HepG2 (cell line): ENCODE measurements at regions of chr1 and their contacts with region 1.

Region 1: DNA sequence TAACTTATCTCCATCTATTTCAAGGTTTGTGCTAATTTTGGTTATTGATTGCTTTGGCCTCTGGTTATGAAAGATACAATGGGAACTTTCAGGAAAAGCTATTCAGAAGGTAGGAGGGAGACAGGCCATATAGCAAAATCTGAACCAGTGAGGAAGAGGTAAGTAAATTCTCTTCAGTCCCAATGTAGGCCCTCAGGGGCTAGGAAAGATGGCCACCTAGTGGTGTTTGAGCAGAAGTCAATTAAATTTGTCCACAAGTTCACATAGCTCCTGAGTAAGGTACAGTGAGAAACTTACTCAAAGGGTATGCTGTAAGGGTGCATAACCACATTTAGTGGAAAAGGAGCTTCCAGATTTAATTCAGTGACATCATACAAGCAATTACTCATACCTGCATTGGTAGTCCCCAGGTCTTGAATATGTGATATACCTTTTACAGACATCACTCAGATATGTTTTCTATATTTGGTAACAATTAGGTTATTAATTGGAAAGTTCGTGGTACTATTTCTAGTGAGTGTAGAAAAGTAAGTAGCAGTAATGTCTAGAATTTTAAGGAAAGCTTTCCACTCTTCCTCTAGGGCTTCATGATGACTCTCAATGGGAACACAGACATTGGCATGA is 21.4 kb upstream of the FMO1 start:
- DNase-seq: peak; percentile 45
- ATAC-seq: peak; percentile 93
- H3K4me3 ChIP-seq: no peak overlapping the region
- H3K27ac ChIP-seq: no peak overlapping the region
- H3K4me1 ChIP-seq: no peaks in the 10 kb centered on the region
- H3K27me3 ChIP-seq: no peaks in the 10 kb centered on the region
- CTCF ChIP-seq: peak; percentile 74
- EP300 ChIP-seq: no peak
- POLR2A ChIP-seq: no peak
- RAD21 ChIP-seq: peak; percentile 49; the same call in 1 of the 2 replicates

Region 2: GRCh38 chr1:171081314-171081753 is 145.5 kb before region 1 on chr1:
- CTCF ChIA-PET with region 1: interaction called, 3 read pairs
- POLR2A ChIA-PET with region 1: no interaction called
- in situ Hi-C with region 1: no loop called
- intact Hi-C with region 1: loop called (anchors 1 kb)
- DNase-seq: no peak
- ATAC-seq: no peak; the same call in 2 of the 3 replicates
- H3K4me3 ChIP-seq: no peak overlapping the region
- H3K27ac ChIP-seq: no peak overlapping the region
- H3K4me1 ChIP-seq: no peaks in the 10 kb centered on the region
- H3K27me3 ChIP-seq: no peaks in the 10 kb centered on the region
- CTCF ChIP-seq: peak; percentile 35; the same call in 1 of the 2 replicates
- EP300 ChIP-seq: no peak
- POLR2A ChIP-seq: no peak
- RAD21 ChIP-seq: no peak